ENCODE measurements at regions of chr10 and their contacts with region 1.

Region 1: GRCh38 chr10:131786756-131787605 is 113.8 kb upstream of the PPP2R2D start:
- DNase-seq: peak; percentile 4
- H3K4me3 ChIP-seq: no peak overlapping the region
- H3K27ac ChIP-seq: no peak overlapping the region
- H3K4me1 ChIP-seq: no peaks in the 10 kb centered on the region
- H3K27me3 ChIP-seq: no peaks in the 10 kb centered on the region
- CTCF ChIP-seq: peak; percentile 53 to 56

Region 2: GRCh38 chr10:130190055-130190736 is 1596.8 kb before region 1 on chr10:
- CTCF ChIA-PET with region 1: no interaction called
- dilution Hi-C with region 1: no loop called
- in situ Hi-C with region 1: no loop called
- intact Hi-C with region 1: loop called (anchors 2 kb)
- DNase-seq: peak; percentile 74
- H3K4me3 ChIP-seq: peak overlapping the region; percentile 37 to 48 (median 45)
- H3K27ac ChIP-seq: no peak overlapping the region
- H3K4me1 ChIP-seq: peaks cover 7% of the 10 kb centered on the region
- H3K27me3 ChIP-seq: no peaks in the 10 kb centered on the region
- CTCF ChIP-seq: peak; percentile 93 to 94

Region 3: GRCh38 chr10:131748831-131749766 is 37.9 kb before region 1 on chr10:
- CTCF ChIA-PET with region 1: no interaction called
- dilution Hi-C with region 1: loop called (anchors 5 kb)
- in situ Hi-C with region 1: no loop called
- intact Hi-C with region 1: no loop called
- DNase-seq: no peak
- H3K4me3 ChIP-seq: no peak overlapping the region
- H3K27ac ChIP-seq: no peak overlapping the region
- H3K4me1 ChIP-seq: no peaks in the 10 kb centered on the region
- H3K27me3 ChIP-seq: no peaks in the 10 kb centered on the region
- CTCF ChIP-seq: no peak

Measured in mammary epithelial cell (primary cell).